AG04450 (cell line): ENCODE measurements at regions of chr4 and their contacts with region 1.

Region 1: GRCh38 chr4:48375651-48376293 is 34.4 kb downstream of the SLAIN2 start:
- DNase-seq: peak; percentile 74
- H3K4me3 ChIP-seq: no peak overlapping the region
- H3K27ac ChIP-seq: peak overlapping the region; percentile 72
- H3K27me3 ChIP-seq: no peaks in the 10 kb centered on the region
- CTCF ChIP-seq: no peak

Region 2: GRCh38 chr4:47359891-47360290 is 1015.9 kb before region 1 on chr4:
- CTCF ChIA-PET with region 1: no interaction called
- POLR2A ChIA-PET with region 1: interaction called, 10 read pairs
- DNase-seq: no peak
- H3K4me3 ChIP-seq: no peak overlapping the region
- H3K27ac ChIP-seq: no peak overlapping the region
- H3K27me3 ChIP-seq: no peaks in the 10 kb centered on the region
- CTCF ChIP-seq: no peak

Region 3: GRCh38 chr4:48340965-48341775 is 34.6 kb before region 1 on chr4 and contains the start of gene SLAIN2:
- CTCF ChIA-PET with region 1: interaction called, 11 read pairs
- POLR2A ChIA-PET with region 1: interaction called, 12 read pairs
- DNase-seq: peak; percentile 97
- H3K4me3 ChIP-seq: peak within 1 kb of the TSS; percentile 76
- H3K27ac ChIP-seq: peak within 1 kb of the TSS; percentile 94
- H3K27me3 ChIP-seq: no peaks in the 10 kb centered on the region
- CTCF ChIP-seq: peak; percentile 49
- polyA plus RNA-seq, gene SLAIN2: 33.7 and 45.0 TPM in 2 replicates

Region 4: GRCh38 chr4:48346594-48346993 is 29.2 kb before region 1 on chr4:
- CTCF ChIA-PET with region 1: interaction called, 11 read pairs
- POLR2A ChIA-PET with region 1: interaction called, 12 read pairs
- DNase-seq: no peak
- H3K4me3 ChIP-seq: no peak overlapping the region
- H3K27ac ChIP-seq: no peak overlapping the region
- H3K27me3 ChIP-seq: no peaks in the 10 kb centered on the region
- CTCF ChIP-seq: no peak